Caco-2 (cell line): ENCODE measurements at regions of chr20 and their contacts with region 1.

Region 1: DNA sequence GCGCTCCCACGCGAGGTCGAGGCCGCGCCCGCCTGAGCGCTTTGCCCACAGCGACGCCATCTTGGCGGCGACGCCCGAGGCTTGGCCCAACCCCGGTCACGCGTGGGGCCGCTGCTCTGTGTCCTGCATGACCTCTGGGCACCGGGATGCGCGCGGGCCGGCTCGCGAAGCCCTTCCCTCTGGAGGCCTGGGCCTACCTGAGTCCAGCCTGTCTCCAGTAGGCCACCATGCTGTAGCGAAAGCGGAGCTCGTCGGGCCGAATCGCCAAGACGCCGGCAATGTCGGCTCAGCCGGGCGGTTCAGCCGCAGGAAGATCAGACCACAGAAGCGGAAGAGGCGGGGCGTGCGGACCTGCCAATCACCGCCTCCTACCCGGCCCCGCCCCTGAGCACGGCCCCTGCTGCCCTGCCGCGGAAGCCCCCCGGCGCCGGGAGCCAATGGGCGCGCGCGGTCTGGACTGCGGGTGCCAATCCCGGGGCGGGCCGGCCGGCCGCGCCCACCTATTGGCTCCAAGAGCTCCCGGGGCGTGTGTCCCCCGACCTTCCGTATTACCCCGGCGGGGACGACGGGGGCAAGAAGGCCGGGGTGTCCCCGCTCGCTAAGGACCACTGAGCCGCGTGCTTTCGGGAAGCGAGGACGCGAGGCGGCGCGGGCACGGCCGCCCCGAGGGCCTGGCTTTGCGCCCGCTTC is at the start of gene ATP5F1E:
- DNase-seq: peak; percentile 99 to 100
- H3K4me3 ChIP-seq: peak within 1 kb of the TSS; percentile 94
- H3K4me3 Mint-ChIP-seq: peak within 1 kb of the TSS; percentile 85
- H3K27ac Mint-ChIP-seq: peak within 1 kb of the TSS; percentile 90
- H3K4me1 ChIP-seq: peaks cover 21% of the 10 kb centered on the region
- H3K4me1 Mint-ChIP-seq: peaks cover 13% of the 10 kb centered on the region
- H3K27me3 ChIP-seq: no peaks in the 10 kb centered on the region
- H3K27me3 Mint-ChIP-seq: no peaks in the 10 kb centered on the region
- CTCF ChIP-seq: peak in 1 of 2 experiments; percentile 32
- total RNA-seq, gene ATP5F1E: 181 and 186 TPM in 2 replicates

Region 2: DNA sequence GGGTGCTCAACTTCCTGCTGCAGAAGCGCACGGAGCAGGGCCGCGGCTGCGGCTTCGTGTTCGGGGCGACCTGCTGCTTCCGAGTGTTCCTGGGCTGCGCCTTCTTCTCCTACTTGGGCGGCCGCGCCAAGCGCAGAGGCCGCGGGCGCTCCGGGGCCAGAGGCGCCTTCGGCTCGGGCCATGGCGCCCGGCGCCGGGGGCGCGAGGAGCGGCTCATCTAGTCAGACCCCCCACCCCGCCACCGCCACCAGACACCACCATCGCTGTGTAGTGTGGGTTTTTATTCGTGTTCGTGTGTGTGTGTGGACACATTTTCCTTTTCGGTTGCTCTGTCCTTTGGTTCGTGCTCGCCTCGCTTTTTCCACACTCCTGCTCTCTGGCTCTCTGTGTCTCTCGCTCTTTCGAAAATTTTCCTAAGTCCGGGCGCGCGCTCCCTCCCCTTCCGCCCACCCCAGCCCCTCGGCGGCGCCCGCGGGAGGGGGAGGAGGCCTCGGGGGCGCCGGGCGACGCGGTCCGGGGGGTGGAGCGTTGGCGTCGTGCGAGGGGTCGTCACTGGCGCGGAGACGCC is 141.6 kb before region 1 on chr20:
- CTCF ChIA-PET with region 1: no interaction called
- POLR2A ChIA-PET with region 1: interaction called, 6 read pairs
- intact Hi-C with region 1: loop called (anchors 2 kb)
- DNase-seq: peak; percentile 83 to 90
- H3K4me3 ChIP-seq: peak overlapping the region; percentile 98
- H3K4me3 Mint-ChIP-seq: peak overlapping the region; percentile 99
- H3K27ac Mint-ChIP-seq: peak overlapping the region; percentile 68
- H3K4me1 ChIP-seq: peaks cover 26% of the 10 kb centered on the region
- H3K4me1 Mint-ChIP-seq: peaks cover 7% of the 10 kb centered on the region
- H3K27me3 ChIP-seq: no peaks in the 10 kb centered on the region
- H3K27me3 Mint-ChIP-seq: no peaks in the 10 kb centered on the region
- CTCF ChIP-seq: no peak

Region 3: GRCh38 chr20:58993332-58994201 is 38.6 kb before region 1 on chr20:
- CTCF ChIA-PET with region 1: interaction called, 3 read pairs
- POLR2A ChIA-PET with region 1: interaction called, 17 read pairs
- intact Hi-C with region 1: no loop called
- DNase-seq: peak in 1 of 2 experiments; percentile 41
- H3K4me3 ChIP-seq: no peak overlapping the region
- H3K4me3 Mint-ChIP-seq: no peak overlapping the region
- H3K27ac Mint-ChIP-seq: no peak overlapping the region
- H3K4me1 ChIP-seq: peaks cover 15% of the 10 kb centered on the region
- H3K4me1 Mint-ChIP-seq: peaks cover 19% of the 10 kb centered on the region
- H3K27me3 ChIP-seq: no peaks in the 10 kb centered on the region
- H3K27me3 Mint-ChIP-seq: no peaks in the 10 kb centered on the region
- CTCF ChIP-seq: no peak

Region 4: GRCh38 chr20:59016795-59017492 is 15.2 kb before region 1 on chr20:
- CTCF ChIA-PET with region 1: interaction called, 5 read pairs
- POLR2A ChIA-PET with region 1: interaction called, 19 read pairs
- intact Hi-C with region 1: loop called (anchors 1 kb)
- DNase-seq: no peak
- H3K4me3 ChIP-seq: no peak overlapping the region
- H3K4me3 Mint-ChIP-seq: no peak overlapping the region
- H3K27ac Mint-ChIP-seq: peak overlapping the region; percentile 24
- H3K4me1 ChIP-seq: peaks cover 17% of the 10 kb centered on the region
- H3K4me1 Mint-ChIP-seq: peaks cover 28% of the 10 kb centered on the region
- H3K27me3 ChIP-seq: no peaks in the 10 kb centered on the region
- H3K27me3 Mint-ChIP-seq: no peaks in the 10 kb centered on the region
- CTCF ChIP-seq: no peak

Region 5: DNA sequence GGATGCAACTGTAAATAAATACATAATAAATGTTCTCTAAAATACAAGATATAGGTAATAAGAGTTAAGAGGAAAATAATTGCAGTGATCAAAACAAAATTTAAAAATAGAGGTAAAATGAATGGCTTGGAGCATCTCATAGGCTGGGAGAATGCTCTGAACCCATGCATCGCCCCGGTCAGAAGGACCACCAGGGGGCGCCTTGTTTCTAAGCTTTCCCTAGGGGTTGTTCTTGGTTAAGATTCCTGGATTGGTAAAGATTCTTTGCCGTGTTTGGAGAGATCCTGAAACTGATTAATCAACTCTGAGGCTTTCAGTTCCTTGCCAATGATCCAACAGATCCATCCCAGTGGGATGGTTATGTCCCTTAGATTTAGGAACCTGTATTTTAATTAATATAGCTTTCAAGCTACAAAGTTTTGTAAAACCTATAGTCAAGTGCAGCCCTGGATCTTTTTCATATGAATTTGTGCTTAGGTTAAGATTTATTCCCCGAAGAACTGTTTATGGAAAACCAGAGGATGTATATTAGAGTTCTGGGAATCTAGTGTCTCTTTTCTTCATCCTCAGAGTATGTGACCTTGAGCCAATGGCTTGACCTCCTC is 55.8 kb after region 1 on chr20:
- CTCF ChIA-PET with region 1: interaction called, 10 read pairs
- POLR2A ChIA-PET with region 1: no interaction called
- intact Hi-C with region 1: no loop called
- DNase-seq: peak; percentile 86 to 93
- H3K4me3 ChIP-seq: no peak overlapping the region
- H3K4me3 Mint-ChIP-seq: no peak overlapping the region
- H3K27ac Mint-ChIP-seq: no peak overlapping the region
- H3K4me1 ChIP-seq: peaks cover under 1% of the 10 kb centered on the region; the same call in 1 of the 2 replicates
- H3K4me1 Mint-ChIP-seq: no peaks in the 10 kb centered on the region
- H3K27me3 ChIP-seq: 0 out of 2 replicates have a peak, but pooled peaks cover 1% of the 10 kb centered on the region
- H3K27me3 Mint-ChIP-seq: peaks cover 31% of the 10 kb centered on the region
- CTCF ChIP-seq: peak; percentile 99